Breast epithelium (tissue), 4 donors: ENCODE measurements at regions of chr1 and their contacts with region 1.

Region 1: DNA sequence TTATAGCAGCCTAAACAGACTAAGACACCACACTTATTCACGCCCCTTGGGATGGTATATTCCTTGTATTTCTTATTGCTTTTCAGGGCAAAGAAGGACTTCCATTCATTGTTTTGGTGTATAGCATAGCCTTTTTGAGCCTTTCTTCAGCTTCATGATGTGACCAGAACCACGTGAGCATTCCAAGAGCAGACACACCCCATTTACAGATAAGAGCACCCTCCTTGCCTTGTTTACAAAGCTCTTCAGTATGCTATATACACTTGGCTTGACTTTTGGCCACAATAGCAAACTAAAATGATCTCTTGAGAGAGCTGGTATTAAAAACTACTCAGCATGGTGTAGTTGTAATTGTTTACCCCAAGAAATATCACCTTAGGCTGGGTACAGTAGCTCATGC is 78.7 kb downstream of the PIK3R3 start:
- DNase-seq: no peak
- H3K4me3 ChIP-seq: no peak overlapping the region
- H3K27ac ChIP-seq: no peak overlapping the region
- H3K4me1 ChIP-seq: no peaks in the 10 kb centered on the region
- H3K27me3 ChIP-seq: no peaks in the 10 kb centered on the region
- CTCF ChIP-seq: no peak
- POLR2A ChIP-seq: no peak

Region 2: GRCh38 chr1:46527474-46528296 is 474.0 kb after region 1 on chr1:
- intact Hi-C with region 1: loop called (anchors 10 kb)
- DNase-seq: peak; percentile 67 to 81
- H3K4me3 ChIP-seq: no peak overlapping the region
- H3K27ac ChIP-seq: no peak overlapping the region
- H3K4me1 ChIP-seq: peaks cover 0 to 4% of the 10 kb centered on the region in 2 donors
- H3K27me3 ChIP-seq: peaks cover 0 to 15% of the 10 kb centered on the region in 2 donors
- CTCF ChIP-seq: peak; percentile 77 to 88 (median 87)
- POLR2A ChIP-seq: no peak